ENCODE measurements at regions of chr3 and their contacts with region 1.

Region 1: DNA sequence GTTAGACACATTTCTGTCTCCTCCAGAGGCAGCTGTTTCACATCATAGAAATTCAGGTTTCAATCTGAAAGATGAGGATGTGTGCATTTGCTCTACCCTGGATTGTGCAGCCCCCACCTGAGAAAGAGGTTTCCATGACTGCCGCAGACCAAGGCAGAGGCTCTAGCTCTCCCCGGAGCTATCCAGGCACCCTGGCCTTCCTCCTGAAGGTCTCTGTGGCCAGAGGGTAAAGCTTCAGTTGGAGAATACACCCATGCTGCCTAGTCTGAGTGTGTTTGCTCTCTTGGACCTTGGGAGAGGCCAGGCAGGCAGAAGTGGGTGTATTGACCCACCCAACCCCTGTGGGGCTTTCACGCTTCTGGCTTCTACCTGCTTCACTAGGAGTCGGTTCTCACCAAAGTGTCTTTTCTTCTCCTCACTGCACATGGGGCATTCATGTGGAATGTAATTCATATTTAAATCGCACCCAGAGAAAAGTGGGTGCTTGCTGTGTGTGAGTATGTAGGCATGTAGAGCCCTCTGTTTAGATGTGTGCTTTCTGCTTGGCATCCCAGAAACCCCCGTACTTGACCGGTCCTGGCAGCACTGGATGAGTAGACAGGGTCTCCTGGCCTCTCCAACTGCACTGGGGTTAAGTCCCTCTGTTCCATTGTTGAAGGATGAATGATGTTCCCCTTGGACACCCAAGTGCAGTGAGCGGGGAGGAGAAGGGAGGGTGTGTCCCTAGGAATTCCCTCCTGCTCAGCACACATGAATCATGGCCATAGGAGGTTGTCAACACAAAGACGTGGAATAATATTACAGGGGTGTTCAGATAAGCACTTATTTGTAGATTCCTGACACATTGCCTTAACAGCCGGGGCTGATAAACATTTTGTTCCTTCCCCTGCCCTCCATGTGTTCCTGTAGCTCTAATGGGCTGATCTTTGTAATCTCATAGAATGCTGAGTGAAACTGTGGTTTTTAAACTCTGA is 20.3 kb upstream of the RAB6B start:
- DNase-seq: no peak
- ATAC-seq: no peak; the same call in 2 of the 3 replicates
- H3K4me3 ChIP-seq: no peak overlapping the region
- H3K27ac ChIP-seq: no peak overlapping the region
- H3K4me1 ChIP-seq: no peaks in the 10 kb centered on the region
- H3K27me3 ChIP-seq: peaks cover 0 to 15% of the 10 kb centered on the region in 2 experiments; a peak in 1 of 5 replicates
- CTCF ChIP-seq: no peak
- EP300 ChIP-seq: no peak
- POLR2A ChIP-seq: no peak
- RAD21 ChIP-seq: no peak

Region 2: GRCh38 chr3:133633439-133633838 is 282.5 kb before region 1 on chr3:
- CTCF ChIA-PET with region 1: no interaction called
- POLR2A ChIA-PET with region 1: no interaction called
- in situ Hi-C with region 1: no loop called
- intact Hi-C with region 1: no loop called
- DNase-seq: peak; percentile 34
- ATAC-seq: peak; percentile 78
- H3K4me3 ChIP-seq: no peak overlapping the region
- H3K27ac ChIP-seq: peak overlapping the region; percentile 67
- H3K4me1 ChIP-seq: peaks cover 19% of the 10 kb centered on the region
- H3K27me3 ChIP-seq: no peaks in the 10 kb centered on the region
- CTCF ChIP-seq: no peak
- EP300 ChIP-seq: no peak
- POLR2A ChIP-seq: no peak
- RAD21 ChIP-seq: no peak

Region 3: GRCh38 chr3:133859381-133860234 is 56.4 kb before region 1 on chr3:
- CTCF ChIA-PET with region 1: no interaction called
- POLR2A ChIA-PET with region 1: no interaction called
- in situ Hi-C with region 1: no loop called
- intact Hi-C with region 1: loop called (anchors 2 kb)
- DNase-seq: no peak
- ATAC-seq: no peak; the same call in 2 of the 3 replicates
- H3K4me3 ChIP-seq: no peak overlapping the region
- H3K27ac ChIP-seq: no peak overlapping the region
- H3K4me1 ChIP-seq: no peaks in the 10 kb centered on the region
- H3K27me3 ChIP-seq: peaks cover 7 to 63% of the 10 kb centered on the region in 2 experiments
- CTCF ChIP-seq: no peak
- EP300 ChIP-seq: no peak
- POLR2A ChIP-seq: no peak
- RAD21 ChIP-seq: no peak